AG04450 (cell line): ENCODE measurements at regions of chr16 and their contacts with region 1.

Region 1: GRCh38 chr16:50210266-50211038 is 55.9 kb upstream of the ADCY7 start:
- DNase-seq: peak; percentile 59
- H3K4me3 ChIP-seq: no peak overlapping the region
- H3K27ac ChIP-seq: no peak overlapping the region
- H3K27me3 ChIP-seq: no peaks in the 10 kb centered on the region
- CTCF ChIP-seq: peak; percentile 86

Region 2: DNA sequence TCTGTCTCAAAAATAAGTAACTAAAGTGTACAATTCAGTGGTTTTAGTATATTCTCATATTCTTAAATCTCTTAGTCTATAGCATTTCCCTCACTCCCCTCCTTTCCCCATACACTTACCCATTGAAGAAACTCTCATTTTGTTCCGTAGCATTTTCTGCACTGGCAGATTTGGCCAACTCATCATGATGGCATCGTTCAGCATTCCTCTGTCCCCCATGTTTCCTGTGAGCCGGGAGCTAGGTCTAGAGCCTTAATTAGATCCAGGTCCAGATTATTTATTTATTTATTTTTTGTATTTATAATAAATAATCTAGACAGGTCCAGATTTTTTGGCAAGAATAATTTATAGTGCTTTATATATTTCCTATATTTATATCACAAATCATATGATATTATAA is 113.7 kb before region 1 on chr16:
- CTCF ChIA-PET with region 1: interaction called, 16 read pairs
- POLR2A ChIA-PET with region 1: no interaction called
- DNase-seq: peak; percentile 24
- H3K4me3 ChIP-seq: no peak overlapping the region
- H3K27ac ChIP-seq: no peak overlapping the region
- H3K27me3 ChIP-seq: no peaks in the 10 kb centered on the region
- CTCF ChIP-seq: no peak

Region 3: DNA sequence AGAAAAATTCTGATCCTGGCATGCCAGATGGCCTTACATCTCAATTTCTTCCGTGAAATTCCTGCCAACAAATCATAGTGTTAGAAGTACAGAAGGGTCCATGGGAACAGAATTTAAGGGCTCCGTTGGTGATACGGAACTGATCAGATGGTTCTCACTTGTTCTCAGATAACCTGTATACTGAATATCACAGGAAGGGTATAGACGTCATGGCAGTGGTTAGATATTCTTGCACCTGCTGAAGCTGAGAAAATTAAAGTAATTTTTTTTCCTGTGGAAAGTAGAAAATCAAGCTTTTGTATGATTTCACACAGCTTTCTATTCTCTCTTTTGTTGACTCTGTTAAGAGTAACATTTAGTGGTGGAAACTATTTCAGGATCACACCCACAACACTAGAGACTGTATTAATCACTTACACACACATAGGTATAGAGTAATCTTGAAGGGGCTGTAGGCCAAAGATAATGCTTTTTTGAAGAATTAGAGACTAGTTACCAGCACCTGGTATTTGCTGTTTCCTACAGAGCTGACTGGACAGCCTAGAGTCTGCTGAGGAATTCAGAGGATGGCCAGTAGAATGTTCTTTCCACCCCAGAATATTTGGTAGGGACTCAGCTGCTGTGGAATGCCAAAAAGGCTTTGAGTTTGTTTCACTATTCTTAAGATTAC is 49.8 kb before region 1 on chr16:
- CTCF ChIA-PET with region 1: interaction called, 28 read pairs
- POLR2A ChIA-PET with region 1: interaction called, 7 read pairs
- DNase-seq: no peak
- H3K4me3 ChIP-seq: no peak overlapping the region
- H3K27ac ChIP-seq: no peak overlapping the region
- H3K27me3 ChIP-seq: no peaks in the 10 kb centered on the region
- CTCF ChIP-seq: no peak

Region 4: GRCh38 chr16:50228364-50228868 is 18.0 kb after region 1 on chr16:
- CTCF ChIA-PET with region 1: interaction called, 13 read pairs
- POLR2A ChIA-PET with region 1: no interaction called
- DNase-seq: no peak
- H3K4me3 ChIP-seq: no peak overlapping the region
- H3K27ac ChIP-seq: no peak overlapping the region
- H3K27me3 ChIP-seq: no peaks in the 10 kb centered on the region
- CTCF ChIP-seq: no peak

Region 5: DNA sequence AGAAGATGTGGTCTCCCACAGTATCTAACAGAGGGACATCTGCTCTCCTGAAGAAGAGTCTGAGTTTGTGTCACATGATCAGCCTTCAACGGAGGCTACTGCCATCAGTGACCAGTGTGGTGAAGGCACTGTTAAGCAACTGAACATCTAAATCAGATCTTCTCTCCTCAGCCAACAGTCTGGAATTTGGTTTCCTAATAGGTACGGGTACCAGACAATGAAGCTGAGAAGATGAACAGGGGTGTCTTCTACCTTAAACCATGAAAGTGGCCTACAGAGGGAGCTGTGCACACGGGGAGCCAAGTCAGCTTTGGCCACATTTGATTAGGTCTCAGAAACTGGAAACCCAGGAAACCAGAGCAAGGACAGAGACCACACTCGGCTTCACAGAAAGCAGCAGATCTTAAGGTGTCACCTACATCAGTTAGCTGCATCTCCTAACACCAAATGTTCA is 116.5 kb after region 1 on chr16:
- CTCF ChIA-PET with region 1: interaction called, 11 read pairs
- POLR2A ChIA-PET with region 1: no interaction called
- DNase-seq: no peak
- H3K4me3 ChIP-seq: no peak overlapping the region
- H3K27ac ChIP-seq: no peak overlapping the region
- H3K27me3 ChIP-seq: no peaks in the 10 kb centered on the region
- CTCF ChIP-seq: peak; percentile 58

Region 6: GRCh38 chr16:50354629-50355456 is 144.4 kb after region 1 on chr16:
- CTCF ChIA-PET with region 1: interaction called, 144 read pairs
- POLR2A ChIA-PET with region 1: no interaction called
- DNase-seq: no peak
- H3K4me3 ChIP-seq: no peak overlapping the region
- H3K27ac ChIP-seq: no peak overlapping the region
- H3K27me3 ChIP-seq: no peaks in the 10 kb centered on the region
- CTCF ChIP-seq: peak; percentile 65

Region 7: GRCh38 chr16:51854401-51854951 is 1644.0 kb after region 1 on chr16:
- CTCF ChIA-PET with region 1: no interaction called
- POLR2A ChIA-PET with region 1: no interaction called
- DNase-seq: no peak
- H3K4me3 ChIP-seq: no peak overlapping the region
- H3K27ac ChIP-seq: no peak overlapping the region
- H3K27me3 ChIP-seq: no peaks in the 10 kb centered on the region
- CTCF ChIP-seq: no peak